Ascending aorta (tissue), 2 donors: ENCODE measurements at regions of chr12 and their contacts with region 1.

Region 1: DNA sequence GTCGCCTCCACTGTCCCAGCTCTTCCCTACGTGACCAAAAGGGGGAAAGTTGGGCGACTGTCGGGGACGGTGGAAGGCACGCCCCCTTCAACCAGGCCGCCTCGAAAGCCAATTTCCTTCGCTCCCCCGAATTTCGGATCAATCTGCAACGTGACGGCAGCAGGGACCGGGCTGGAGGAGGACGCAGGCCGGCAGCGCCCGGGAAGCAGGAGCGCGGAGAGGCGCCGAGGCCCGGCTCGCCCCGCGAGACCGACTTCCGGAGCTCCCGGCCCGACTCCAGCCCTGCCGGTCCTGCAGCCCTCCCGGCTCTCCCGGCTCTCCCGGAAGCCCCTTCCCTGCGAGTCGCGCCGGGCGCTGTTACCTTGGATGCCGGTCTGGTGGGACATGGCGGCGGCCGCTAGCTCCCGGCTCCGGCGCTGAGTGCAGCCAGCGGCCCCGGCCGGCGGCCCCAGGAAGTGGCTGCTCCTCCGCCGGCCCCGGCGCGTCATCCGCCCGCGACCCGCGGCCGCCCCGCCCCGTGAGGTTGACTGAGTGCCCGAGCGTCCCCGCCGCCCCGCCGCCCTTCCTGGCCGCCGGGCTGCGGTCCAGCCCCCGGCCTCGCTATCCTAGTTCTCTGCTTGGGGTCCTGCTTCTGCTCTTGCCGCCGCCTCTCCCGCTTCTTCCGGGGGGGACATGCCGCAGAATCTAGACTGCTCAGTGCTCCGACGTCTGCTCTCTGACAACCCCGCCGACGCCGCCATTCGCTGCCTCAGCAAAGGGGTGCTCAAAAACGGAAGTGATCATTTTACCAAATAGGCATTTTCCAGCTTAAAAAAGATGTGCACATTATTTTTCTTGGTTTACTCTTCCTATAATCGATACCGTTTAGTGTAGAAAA is at the start of gene TWF1:
- DNase-seq: peak; percentile 56 to 94
- H3K4me3 ChIP-seq: peak within 1 kb of the TSS; percentile 91 to 99
- H3K27ac ChIP-seq: peak within 1 kb of the TSS; percentile 90 to 98
- H3K4me1 ChIP-seq: peaks cover 0 to 9% of the 10 kb centered on the region in 2 donors
- H3K27me3 ChIP-seq: no peaks in the 10 kb centered on the region
- CTCF ChIP-seq: peak; percentile 25 to 40 (median 36)
- total RNA-seq, gene TWF1: 67.2 TPM

Region 2: DNA sequence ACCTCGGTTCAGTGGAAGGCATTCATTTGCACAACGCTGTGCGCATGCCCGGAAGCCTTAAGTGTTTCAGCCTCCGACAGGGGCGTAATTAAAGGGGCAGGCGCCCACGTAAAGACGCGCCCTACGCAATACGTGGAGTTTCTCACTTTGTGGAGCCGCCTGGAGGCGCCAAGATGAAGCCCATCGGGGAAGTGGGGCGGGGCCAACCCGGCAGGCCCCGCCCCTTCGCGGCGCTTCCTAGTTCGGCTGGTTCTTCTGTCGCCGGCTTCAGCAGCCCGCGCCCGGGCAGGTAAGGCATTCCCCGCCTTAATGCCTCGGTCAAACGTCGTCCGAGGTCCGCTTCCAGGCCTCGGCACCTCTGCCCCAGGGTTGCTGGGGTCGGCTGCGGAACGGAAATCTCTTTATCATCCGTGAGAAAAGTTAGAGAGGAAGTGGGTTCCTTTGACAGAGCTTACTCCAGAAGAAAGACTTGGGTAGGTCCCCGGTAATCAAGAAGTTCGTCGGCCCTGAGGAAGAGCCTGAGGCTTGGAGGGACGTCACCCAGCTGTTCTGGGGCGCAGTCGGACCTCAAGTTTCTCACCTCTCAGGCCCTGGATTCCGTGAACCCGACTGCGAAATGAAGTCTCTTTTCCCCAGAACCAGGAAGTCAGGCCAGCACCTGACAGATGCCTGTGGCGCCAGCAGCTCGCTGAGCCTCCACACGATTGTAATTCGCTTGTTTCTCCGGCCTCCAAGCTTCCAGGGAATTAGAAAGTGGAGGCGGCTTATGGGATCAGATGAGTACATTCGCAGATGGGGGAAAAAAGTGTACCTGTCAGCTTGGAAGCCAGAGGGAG is 47.2 kb before region 1 on chr12 and contains the starts of genes IRAK4 and PUS7L:
- intact Hi-C with region 1: loop called (anchors 1 kb)
- DNase-seq: peak; percentile 85 to 98
- H3K4me3 ChIP-seq: peak within 1 kb of the TSS; percentile 53 to 78
- H3K27ac ChIP-seq: peak within 1 kb of the TSS; percentile 75 to 88
- H3K4me1 ChIP-seq: peaks cover 4 to 21% of the 10 kb centered on the region in 2 donors
- H3K27me3 ChIP-seq: no peaks in the 10 kb centered on the region
- CTCF ChIP-seq: peak; percentile 38 to 50 (median 46)
- total RNA-seq, gene IRAK4: 7.3 TPM
- total RNA-seq, gene PUS7L: 2.4 TPM

Region 3: GRCh38 chr12:43835656-43836474 is 29.8 kb after region 1 on chr12 and contains the start of gene TMEM117:
- intact Hi-C with region 1: loop called (anchors 1 kb)
- DNase-seq: peak; percentile 13 to 82
- H3K4me3 ChIP-seq: peak within 1 kb of the TSS; percentile 88 to 89
- H3K27ac ChIP-seq: peak within 1 kb of the TSS; percentile 97
- H3K4me1 ChIP-seq: peaks cover 0 to 12% of the 10 kb centered on the region in 2 donors
- H3K27me3 ChIP-seq: no peaks in the 10 kb centered on the region
- CTCF ChIP-seq: no peak
- total RNA-seq, gene TMEM117: 0.43 TPM

Region 4: DNA sequence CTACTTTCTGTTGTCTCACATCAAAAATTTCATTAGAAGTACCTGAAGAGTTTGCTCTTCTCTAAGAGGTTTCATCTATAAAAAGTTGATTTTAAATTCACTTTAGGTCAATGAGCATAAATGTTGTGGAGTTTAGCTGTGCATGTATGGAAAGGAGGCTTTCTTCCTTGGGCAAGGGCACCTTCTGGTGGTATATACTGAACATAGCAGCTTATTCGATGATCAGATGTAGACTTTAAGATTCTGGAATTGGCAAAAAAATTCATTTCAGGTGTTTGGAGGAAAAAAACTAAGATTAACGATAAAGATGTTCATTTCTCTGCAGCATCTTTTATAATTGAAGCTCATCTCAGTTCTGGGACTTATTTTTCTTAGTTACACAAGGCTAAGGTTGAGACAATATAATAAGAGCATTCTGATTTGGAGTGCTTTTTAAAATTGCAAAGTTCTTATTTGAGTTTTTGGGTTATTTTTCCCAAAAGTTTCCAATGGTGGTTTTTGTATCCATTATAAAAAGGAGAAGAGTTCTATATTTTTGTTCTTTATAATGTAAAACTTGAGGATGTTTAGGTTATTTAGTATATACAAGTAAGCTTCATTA is 76.6 kb after region 1 on chr12:
- intact Hi-C with region 1: loop called (anchors 1 kb)
- DNase-seq: no peak
- H3K4me3 ChIP-seq: no peak overlapping the region
- H3K27ac ChIP-seq: no peak overlapping the region
- H3K4me1 ChIP-seq: no peaks in the 10 kb centered on the region
- H3K27me3 ChIP-seq: no peaks in the 10 kb centered on the region
- CTCF ChIP-seq: peak; percentile 44 to 79 (median 70)

Region 5: GRCh38 chr12:45415393-45415817 is 1609.3 kb after region 1 on chr12:
- intact Hi-C with region 1: loop called (anchors 10 kb)
- DNase-seq: peak; percentile 66 to 91
- H3K4me3 ChIP-seq: no peak overlapping the region
- H3K27ac ChIP-seq: peak overlapping the region; percentile 69 to 79
- H3K4me1 ChIP-seq: peaks cover 0 to 7% of the 10 kb centered on the region in 2 donors
- H3K27me3 ChIP-seq: no peaks in the 10 kb centered on the region
- CTCF ChIP-seq: no peak